ENCODE measurements at regions of chr6 and their contacts with region 1.

Region 1: DNA sequence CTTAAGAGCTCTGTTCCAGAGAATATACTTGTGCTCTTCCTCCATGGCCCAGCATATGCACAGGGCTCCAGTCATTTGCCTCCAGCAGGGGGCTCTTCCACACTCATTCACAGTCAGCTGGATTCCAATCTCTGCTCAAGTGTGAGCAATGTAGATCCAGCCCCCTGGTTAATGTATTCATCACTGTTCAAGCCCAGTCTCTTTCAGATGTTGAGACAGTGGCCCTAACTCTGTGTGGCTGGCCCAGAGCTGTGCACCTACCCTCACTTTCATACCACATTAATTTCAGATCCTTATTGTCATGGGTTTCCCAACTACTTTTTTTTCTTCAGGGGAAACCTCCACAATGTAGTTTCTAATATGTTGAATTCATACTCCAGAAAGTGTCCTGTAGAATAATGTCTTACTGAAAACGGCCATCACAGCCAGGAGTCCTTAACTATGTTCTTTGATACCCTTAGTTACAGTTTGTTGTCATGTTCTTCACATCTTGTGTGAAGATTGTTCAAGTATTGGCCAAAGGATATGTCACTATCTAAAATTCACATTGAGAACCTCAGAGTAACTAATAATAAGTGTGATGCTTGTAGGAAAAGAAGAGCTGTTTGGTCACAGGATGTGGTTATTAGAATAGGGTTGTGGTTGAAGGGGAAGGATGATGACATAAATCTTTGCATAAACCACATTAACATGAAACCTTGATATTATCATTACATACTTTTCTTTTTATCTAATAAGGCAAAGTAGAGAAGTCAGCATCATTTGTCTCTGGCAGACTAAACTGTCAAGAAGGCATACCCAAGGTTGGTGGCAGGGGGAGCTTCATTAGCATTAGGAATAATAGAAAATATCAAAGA is 14.4 kb upstream of the HLA-DQA1 start:
- DNase-seq: peak; percentile 6 to 94 (median 44)
- ATAC-seq: peak; percentile 82
- H3K4me3 ChIP-seq: no peak overlapping the region
- H3K4me3 Mint-ChIP-seq: peak overlapping the region; percentile 6
- H3K27ac ChIP-seq: peak overlapping the region; percentile 60 to 89
- H3K27ac Mint-ChIP-seq: peak overlapping the region; percentile 85
- H3K4me1 ChIP-seq: peaks cover 38% of the 10 kb centered on the region
- H3K4me1 Mint-ChIP-seq: peaks cover 33% of the 10 kb centered on the region
- H3K27me3 ChIP-seq: no peaks in the 10 kb centered on the region
- H3K27me3 Mint-ChIP-seq: no peaks in the 10 kb centered on the region
- CTCF ChIP-seq: peak; percentile 47

Region 2: GRCh38 chr6:32609731-32610640 is 12.8 kb before region 1 on chr6:
- CTCF ChIA-PET with region 1: interaction called, 5 read pairs
- POLR2A ChIA-PET with region 1: no interaction called
- intact Hi-C with region 1: loop called in 1 of 2 experiments (anchors 1 kb)
- DNase-seq: peak in 7 of 9 experiments; percentile 2 to 97 (median 46)
- ATAC-seq: peak; percentile 94
- H3K4me3 ChIP-seq: peak overlapping the region in 1 of 2 experiments; percentile 44
- H3K4me3 Mint-ChIP-seq: no peak overlapping the region
- H3K27ac ChIP-seq: peak overlapping the region; percentile 64 to 93
- H3K27ac Mint-ChIP-seq: no peak overlapping the region
- H3K4me1 ChIP-seq: peaks cover 11% of the 10 kb centered on the region
- H3K4me1 Mint-ChIP-seq: no peaks in the 10 kb centered on the region
- H3K27me3 ChIP-seq: no peaks in the 10 kb centered on the region
- H3K27me3 Mint-ChIP-seq: peaks cover 3% of the 10 kb centered on the region
- CTCF ChIP-seq: no peak

Region 3: DNA sequence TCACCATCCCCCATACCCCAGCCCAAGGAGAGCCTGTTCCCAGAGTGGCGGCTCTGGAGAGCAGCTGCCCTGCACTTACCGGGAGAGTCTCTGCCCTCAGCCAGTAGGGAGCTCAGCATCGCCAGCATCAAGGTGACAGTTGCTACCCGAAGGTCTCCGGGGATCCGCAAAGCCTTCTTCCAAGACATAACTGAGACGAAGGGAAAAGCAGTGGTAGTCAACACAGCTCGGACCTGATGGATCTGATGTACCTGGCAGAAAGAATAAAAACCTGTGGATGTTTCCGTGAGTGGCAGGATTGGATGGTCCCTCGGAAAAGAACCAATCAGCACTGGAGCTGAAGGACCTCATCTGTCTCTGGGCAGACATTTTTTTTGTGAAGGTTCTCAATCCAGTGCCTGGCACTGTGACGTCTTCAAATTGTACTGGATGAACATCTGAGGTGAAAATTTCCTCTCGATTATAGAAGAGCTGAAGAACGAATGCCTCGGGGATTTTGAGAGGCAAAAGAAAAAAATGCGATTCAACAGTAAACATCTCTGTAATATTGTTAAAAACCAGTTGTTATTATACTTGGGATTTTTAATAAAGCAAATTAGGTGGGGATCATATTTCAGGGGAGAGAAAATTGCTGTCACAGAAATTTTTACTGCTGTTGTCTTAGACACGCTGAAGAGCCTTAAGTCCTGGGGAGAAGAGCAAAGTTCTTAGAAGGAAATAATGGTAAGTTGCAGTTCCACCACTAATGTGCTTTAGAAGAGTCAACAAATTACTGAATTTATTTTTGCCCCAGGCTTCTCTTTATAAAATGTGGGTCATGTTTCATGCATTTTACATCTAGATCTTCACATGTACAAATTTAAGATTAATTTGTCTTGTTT is 43.9 kb after region 1 on chr6 and contains the start of gene HLA-DQB1:
- CTCF ChIA-PET with region 1: no interaction called
- POLR2A ChIA-PET with region 1: interaction called, 4 read pairs
- intact Hi-C with region 1: loop called (anchors 1 to 5 kb)
- DNase-seq: peak in 8 of 9 experiments; percentile 26 to 80 (median 58)
- ATAC-seq: peak; percentile 80
- H3K4me3 ChIP-seq: peak within 1 kb of the TSS; percentile 48 to 49
- H3K4me3 Mint-ChIP-seq: peak within 1 kb of the TSS; percentile 83
- H3K27ac ChIP-seq: peak within 1 kb of the TSS; percentile 37 to 39
- H3K27ac Mint-ChIP-seq: peak within 1 kb of the TSS; percentile 62
- H3K4me1 ChIP-seq: peaks cover 23% of the 10 kb centered on the region
- H3K4me1 Mint-ChIP-seq: peaks cover 44% of the 10 kb centered on the region
- H3K27me3 ChIP-seq: no peaks in the 10 kb centered on the region
- H3K27me3 Mint-ChIP-seq: peaks cover 28% of the 10 kb centered on the region
- CTCF ChIP-seq: no peak
- total RNA-seq, gene HLA-DQB1: 27.5 to 30.6 TPM

Region 4: GRCh38 chr6:32685603-32686002 is 62.8 kb after region 1 on chr6:
- CTCF ChIA-PET with region 1: interaction called, 5 read pairs
- POLR2A ChIA-PET with region 1: no interaction called
- intact Hi-C with region 1: loop called in 1 of 2 experiments (anchors 2 kb)
- DNase-seq: peak in 4 of 9 experiments; percentile 32 to 93 (median 62)
- ATAC-seq: peak; percentile 91
- H3K4me3 ChIP-seq: no peak overlapping the region
- H3K4me3 Mint-ChIP-seq: peak overlapping the region; percentile 1
- H3K27ac ChIP-seq: peak overlapping the region in 1 of 2 experiments; percentile 66
- H3K27ac Mint-ChIP-seq: peak overlapping the region; percentile 50
- H3K4me1 ChIP-seq: peaks cover 19% of the 10 kb centered on the region
- H3K4me1 Mint-ChIP-seq: peaks cover 24% of the 10 kb centered on the region
- H3K27me3 ChIP-seq: no peaks in the 10 kb centered on the region
- H3K27me3 Mint-ChIP-seq: no peaks in the 10 kb centered on the region
- CTCF ChIP-seq: no peak

Region 5: DNA sequence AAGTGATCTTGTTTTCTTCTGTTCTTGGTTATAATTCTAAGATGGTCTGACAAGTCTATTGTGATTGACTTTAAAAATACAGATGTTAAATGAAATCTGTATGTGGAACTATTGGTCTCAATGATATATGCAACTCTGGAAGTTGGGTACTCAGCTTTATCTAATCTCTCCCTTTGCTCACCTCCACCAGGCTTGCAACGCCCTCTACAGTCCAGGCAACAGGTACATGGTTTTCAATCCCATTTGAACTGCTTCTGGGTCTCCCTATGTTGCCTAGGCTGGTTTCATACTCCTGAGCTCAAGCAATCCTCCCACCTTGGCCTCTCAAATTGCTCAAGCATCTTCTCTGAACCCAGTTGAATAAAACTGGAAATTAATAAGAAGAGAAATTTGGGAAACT is 69.2 kb after region 1 on chr6:
- CTCF ChIA-PET with region 1: interaction called, 7 read pairs
- POLR2A ChIA-PET with region 1: no interaction called
- intact Hi-C with region 1: loop called (anchors 1 to 2 kb)
- DNase-seq: peak in 8 of 9 experiments; percentile 22 to 82 (median 54)
- ATAC-seq: peak; percentile 59
- H3K4me3 ChIP-seq: no peak overlapping the region
- H3K4me3 Mint-ChIP-seq: no peak overlapping the region
- H3K27ac ChIP-seq: no peak overlapping the region
- H3K27ac Mint-ChIP-seq: no peak overlapping the region
- H3K4me1 ChIP-seq: peaks cover under 1% of the 10 kb centered on the region
- H3K4me1 Mint-ChIP-seq: peaks cover 3% of the 10 kb centered on the region
- H3K27me3 ChIP-seq: peaks cover 0 to 3% of the 10 kb centered on the region in 2 experiments
- H3K27me3 Mint-ChIP-seq: peaks cover 23% of the 10 kb centered on the region
- CTCF ChIP-seq: peak; percentile 51

Region 6: DNA sequence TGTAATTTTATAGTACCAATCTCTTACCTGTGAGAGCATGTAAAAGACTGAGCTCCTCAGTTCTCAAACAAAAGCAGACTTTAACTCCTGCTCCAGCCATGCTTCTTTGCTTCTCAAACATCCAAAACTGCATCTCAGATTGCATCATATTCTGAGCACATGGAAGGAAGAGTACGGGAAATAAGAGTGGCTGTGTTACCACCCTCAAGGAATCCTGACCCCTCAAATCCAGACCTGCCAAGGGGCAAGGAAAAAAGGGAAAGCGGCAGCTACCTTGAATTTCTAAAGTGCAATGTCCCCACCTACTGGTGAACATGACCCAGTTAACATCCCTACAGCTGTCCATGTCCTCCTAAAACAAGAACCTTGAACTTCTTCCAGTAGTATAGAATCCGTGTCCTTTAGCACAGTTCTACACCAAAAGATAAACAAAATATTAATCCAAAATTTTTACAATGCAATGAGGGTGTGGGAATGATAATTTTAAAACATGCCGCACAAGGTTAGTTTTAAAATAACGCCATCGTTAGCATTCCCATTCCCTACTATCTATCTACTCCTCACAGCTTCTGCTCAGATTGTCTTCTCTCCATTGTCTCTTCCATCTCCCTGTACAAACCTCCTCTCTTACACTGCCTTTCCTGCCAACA is 77.7 kb after region 1 on chr6:
- CTCF ChIA-PET with region 1: interaction called, 16 read pairs
- POLR2A ChIA-PET with region 1: no interaction called
- intact Hi-C with region 1: loop called in 1 of 2 experiments (anchors 1 kb)
- DNase-seq: peak in 6 of 9 experiments; percentile 2 to 71 (median 46)
- ATAC-seq: peak; percentile 49
- H3K4me3 ChIP-seq: no peak overlapping the region
- H3K4me3 Mint-ChIP-seq: no peak overlapping the region
- H3K27ac ChIP-seq: no peak overlapping the region
- H3K27ac Mint-ChIP-seq: no peak overlapping the region
- H3K4me1 ChIP-seq: no peaks in the 10 kb centered on the region
- H3K4me1 Mint-ChIP-seq: peaks cover 4% of the 10 kb centered on the region
- H3K27me3 ChIP-seq: no peaks in the 10 kb centered on the region
- H3K27me3 Mint-ChIP-seq: peaks cover 40% of the 10 kb centered on the region
- CTCF ChIP-seq: peak; percentile 86

Measured in CD8-positive, alpha-beta T cell (primary cell).